ENCODE measurements at regions of chr1 and their contacts with region 1.

Region 1: DNA sequence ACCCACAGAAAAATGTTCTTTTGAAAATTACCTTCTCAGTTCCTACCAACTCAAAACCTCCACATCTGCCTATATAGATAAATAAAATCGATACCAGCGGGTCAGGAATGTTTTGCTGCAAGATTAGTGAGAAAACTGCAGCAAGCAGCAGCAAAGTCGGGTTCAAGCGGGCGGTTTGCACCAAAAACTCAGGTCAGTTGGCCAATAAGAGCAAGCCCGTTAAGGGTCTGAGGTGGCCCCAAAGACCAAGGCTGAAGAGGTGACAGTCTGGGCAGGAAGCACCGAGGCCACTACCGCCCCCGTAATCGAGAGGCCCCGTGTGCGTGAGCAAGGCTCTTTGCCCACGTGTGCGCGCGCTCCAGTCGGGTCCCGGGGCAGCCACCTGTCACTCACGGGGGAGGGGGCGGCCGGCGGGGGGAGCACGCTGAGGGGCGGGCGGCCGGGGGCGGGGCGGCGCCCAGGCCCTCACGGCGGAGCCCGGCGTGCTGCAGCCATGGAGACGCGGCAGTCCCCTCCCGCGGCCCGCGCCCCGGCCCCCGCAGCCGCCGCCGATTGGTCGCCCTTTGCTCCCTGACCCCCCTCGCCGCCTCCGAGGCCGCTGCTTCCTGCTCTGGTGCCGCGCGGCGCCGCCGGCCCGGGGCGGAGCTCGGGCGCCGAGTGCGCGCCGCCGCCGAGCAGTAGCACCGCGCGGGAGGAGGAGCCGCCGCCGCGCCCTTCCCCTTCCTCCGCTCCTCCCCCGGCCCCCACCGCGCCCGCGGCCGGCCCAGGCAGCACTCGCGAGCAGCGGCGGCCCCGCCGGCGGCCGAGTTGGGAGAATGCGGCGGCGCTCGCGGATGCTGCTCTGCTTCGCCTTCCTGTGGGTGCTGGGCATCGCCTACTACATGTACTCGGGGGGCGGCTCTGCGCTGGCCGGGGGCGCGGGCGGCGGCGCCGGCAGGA is at the start of gene GALNT2:
- DNase-seq: peak; percentile 94
- H3K4me3 Mint-ChIP-seq: peak within 1 kb of the TSS; percentile 91
- H3K27ac Mint-ChIP-seq: peak within 1 kb of the TSS; percentile 59
- H3K4me1 Mint-ChIP-seq: peaks cover 32% of the 10 kb centered on the region
- H3K27me3 Mint-ChIP-seq: no peaks in the 10 kb centered on the region
- CTCF ChIP-seq: no peak
- total RNA-seq, gene GALNT2: 104 and 114 TPM in 2 replicates

Region 2: DNA sequence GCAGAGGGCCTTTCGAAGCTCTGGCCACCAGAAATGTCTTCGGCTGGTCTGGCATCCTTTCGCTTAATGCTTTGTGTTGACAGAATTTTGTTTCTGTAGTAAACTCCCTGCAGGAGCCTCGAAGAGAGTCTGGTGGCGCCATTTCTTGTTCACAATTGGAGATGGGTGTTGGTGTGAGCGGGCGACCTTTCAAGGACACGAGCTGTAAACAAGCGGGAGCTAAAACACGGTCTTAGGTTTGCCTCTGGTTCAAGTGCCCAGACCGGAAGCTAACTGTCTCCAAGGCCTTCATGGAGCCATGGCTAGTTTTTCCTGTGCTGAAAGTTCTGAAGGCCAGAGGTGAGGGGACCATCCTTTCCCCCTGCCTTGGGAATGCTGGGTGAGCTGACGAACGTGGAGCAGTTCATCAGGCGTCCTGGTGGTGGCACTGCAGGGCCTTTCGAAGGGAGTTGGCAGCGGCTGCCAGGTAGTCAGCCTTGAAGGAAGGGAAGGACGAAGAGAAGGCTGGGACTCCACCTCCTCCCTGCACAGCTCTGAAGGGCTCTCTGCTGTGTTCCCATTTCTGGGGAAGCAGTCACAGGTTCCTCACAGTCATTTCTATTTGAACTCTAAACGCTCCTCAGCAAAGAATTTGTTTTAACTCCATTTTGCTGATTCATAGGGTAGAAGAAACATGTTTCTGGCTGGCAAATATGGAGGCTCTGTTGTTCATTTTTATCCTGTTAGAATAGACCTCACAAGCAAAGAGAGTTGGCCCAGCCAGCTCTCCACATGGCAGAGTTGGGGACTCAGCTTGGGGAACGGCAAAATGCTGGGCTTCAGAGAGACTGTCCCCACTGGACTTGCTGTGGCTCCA is 405.5 kb before region 1 on chr1:
- CTCF ChIA-PET with region 1: interaction called, 17 read pairs
- POLR2A ChIA-PET with region 1: interaction called, 6 read pairs
- intact Hi-C with region 1: loop called (anchors 2 kb)
- DNase-seq: peak; percentile 89
- H3K4me3 Mint-ChIP-seq: no peak overlapping the region
- H3K27ac Mint-ChIP-seq: peak overlapping the region; percentile 13
- H3K4me1 Mint-ChIP-seq: peaks cover 7% of the 10 kb centered on the region
- H3K27me3 Mint-ChIP-seq: no peaks in the 10 kb centered on the region
- CTCF ChIP-seq: peak; percentile 99

Region 3: DNA sequence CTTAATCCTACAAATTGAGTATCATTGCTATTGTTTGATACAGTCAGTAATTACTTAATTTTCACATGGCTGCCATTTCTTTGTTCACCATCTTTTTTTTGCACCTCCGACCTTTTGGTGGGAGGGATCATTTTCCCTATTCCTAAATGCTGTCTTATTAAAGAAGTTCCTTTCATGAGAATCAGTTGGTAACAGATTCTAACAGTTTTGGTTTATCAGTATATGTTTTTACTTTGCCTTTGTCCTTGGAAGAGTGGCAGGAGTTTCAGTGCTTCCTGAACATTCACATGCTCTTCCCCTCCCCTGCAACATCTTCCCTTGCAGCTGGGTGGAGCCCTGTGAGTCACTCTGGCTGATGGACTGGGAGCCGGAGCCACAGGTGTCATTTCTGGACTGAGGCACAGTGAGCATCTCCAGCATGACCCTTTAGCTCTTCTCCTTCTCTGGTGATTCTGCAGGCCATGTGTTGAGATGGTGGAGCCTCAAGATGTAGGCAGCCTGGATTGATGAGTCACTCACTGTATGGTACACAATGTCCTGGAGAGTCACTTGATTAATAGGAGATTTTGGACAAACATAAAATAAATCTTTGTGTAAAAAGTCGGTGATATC is 223.0 kb before region 1 on chr1:
- CTCF ChIA-PET with region 1: no interaction called
- POLR2A ChIA-PET with region 1: interaction called, 3 read pairs
- intact Hi-C with region 1: loop called (anchors 1 kb)
- DNase-seq: peak; percentile 91
- H3K4me3 Mint-ChIP-seq: peak overlapping the region; percentile 5
- H3K27ac Mint-ChIP-seq: peak overlapping the region; percentile 58
- H3K4me1 Mint-ChIP-seq: peaks cover 37% of the 10 kb centered on the region
- H3K27me3 Mint-ChIP-seq: no peaks in the 10 kb centered on the region
- CTCF ChIP-seq: no peak

Region 4: GRCh38 chr1:230043081-230043480 is 23.7 kb before region 1 on chr1:
- CTCF ChIA-PET with region 1: no interaction called
- POLR2A ChIA-PET with region 1: no interaction called
- intact Hi-C with region 1: no loop called
- DNase-seq: no peak
- H3K4me3 Mint-ChIP-seq: no peak overlapping the region
- H3K27ac Mint-ChIP-seq: no peak overlapping the region
- H3K4me1 Mint-ChIP-seq: peaks cover 6% of the 10 kb centered on the region
- H3K27me3 Mint-ChIP-seq: peaks cover 22% of the 10 kb centered on the region
- CTCF ChIP-seq: no peak

Region 5: DNA sequence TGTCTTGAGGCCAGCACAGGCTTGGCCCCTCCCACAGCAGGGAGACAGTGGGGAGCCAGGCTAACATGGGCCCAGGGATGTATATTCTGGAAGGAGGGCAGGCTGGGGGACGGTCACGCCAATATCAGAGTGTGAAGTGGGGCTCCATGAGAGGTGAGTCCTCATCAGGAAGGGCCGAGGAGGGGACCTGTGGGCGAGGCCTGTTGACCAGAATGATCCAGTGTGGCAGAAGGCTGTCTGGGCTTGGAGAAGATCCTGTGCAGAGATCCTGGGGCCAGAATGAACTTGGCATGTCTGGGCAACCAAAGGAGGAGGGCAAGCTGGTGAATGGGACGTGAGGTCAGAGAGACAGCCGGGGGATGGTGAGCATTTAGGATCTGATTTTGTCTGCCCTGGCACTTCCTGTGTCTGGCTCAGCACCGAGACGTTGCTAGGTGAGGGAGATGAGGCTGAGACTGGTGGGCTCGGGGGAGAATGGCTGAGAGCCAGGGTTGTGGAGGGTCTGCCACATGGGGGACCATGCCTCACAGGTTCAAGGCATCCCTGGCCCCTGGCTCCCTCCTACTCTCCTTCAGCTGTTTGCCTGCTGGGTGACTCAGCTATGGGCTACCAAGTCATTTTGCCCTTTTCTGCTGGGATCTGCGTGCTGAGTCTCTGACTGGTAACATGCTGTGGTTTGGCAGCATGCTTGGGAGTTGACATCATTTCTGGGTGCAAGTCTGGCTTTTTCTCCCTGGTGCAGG is 17.6 kb after region 1 on chr1:
- CTCF ChIA-PET with region 1: interaction called, 82 read pairs
- POLR2A ChIA-PET with region 1: interaction called, 166 read pairs
- intact Hi-C with region 1: loop called (anchors 1 kb)
- DNase-seq: peak; percentile 100
- H3K4me3 Mint-ChIP-seq: peak overlapping the region; percentile 46
- H3K27ac Mint-ChIP-seq: peak overlapping the region; percentile 80
- H3K4me1 Mint-ChIP-seq: peaks cover 71% of the 10 kb centered on the region
- H3K27me3 Mint-ChIP-seq: no peaks in the 10 kb centered on the region
- CTCF ChIP-seq: no peak

Region 6: GRCh38 chr1:230120926-230121381 is 54.2 kb after region 1 on chr1:
- CTCF ChIA-PET with region 1: interaction called, 3 read pairs
- POLR2A ChIA-PET with region 1: interaction called, 11 read pairs
- intact Hi-C with region 1: no loop called
- DNase-seq: peak; percentile 72
- H3K4me3 Mint-ChIP-seq: no peak overlapping the region
- H3K27ac Mint-ChIP-seq: peak overlapping the region; percentile 87
- H3K4me1 Mint-ChIP-seq: peaks cover 54% of the 10 kb centered on the region
- H3K27me3 Mint-ChIP-seq: no peaks in the 10 kb centered on the region
- CTCF ChIP-seq: peak; percentile 74

Region 7: GRCh38 chr1:230186003-230186863 is 119.5 kb after region 1 on chr1:
- CTCF ChIA-PET with region 1: no interaction called
- POLR2A ChIA-PET with region 1: interaction called, 5 read pairs
- intact Hi-C with region 1: loop called (anchors 5 kb)
- DNase-seq: peak; percentile 99
- H3K4me3 Mint-ChIP-seq: peak overlapping the region; percentile 18
- H3K27ac Mint-ChIP-seq: peak overlapping the region; percentile 32
- H3K4me1 Mint-ChIP-seq: peaks cover 30% of the 10 kb centered on the region
- H3K27me3 Mint-ChIP-seq: no peaks in the 10 kb centered on the region
- CTCF ChIP-seq: no peak

Region 8: GRCh38 chr1:230268366-230269170 is 201.8 kb after region 1 on chr1:
- CTCF ChIA-PET with region 1: no interaction called
- POLR2A ChIA-PET with region 1: no interaction called
- intact Hi-C with region 1: loop called (anchors 2 kb)
- DNase-seq: peak; percentile 81
- H3K4me3 Mint-ChIP-seq: no peak overlapping the region
- H3K27ac Mint-ChIP-seq: no peak overlapping the region
- H3K4me1 Mint-ChIP-seq: no peaks in the 10 kb centered on the region
- H3K27me3 Mint-ChIP-seq: no peaks in the 10 kb centered on the region
- CTCF ChIP-seq: peak; percentile 87